Activated CD4-positive, alpha-beta memory T cell treated with anti-CD3 and anti-CD28 coated beads, Interleukin-2, amount 10 ng/mL, durations not matched to agents 7 days and 5 days (primary cell): ENCODE measurements at regions of chr1 and their contacts with region 1.

Region 1: DNA sequence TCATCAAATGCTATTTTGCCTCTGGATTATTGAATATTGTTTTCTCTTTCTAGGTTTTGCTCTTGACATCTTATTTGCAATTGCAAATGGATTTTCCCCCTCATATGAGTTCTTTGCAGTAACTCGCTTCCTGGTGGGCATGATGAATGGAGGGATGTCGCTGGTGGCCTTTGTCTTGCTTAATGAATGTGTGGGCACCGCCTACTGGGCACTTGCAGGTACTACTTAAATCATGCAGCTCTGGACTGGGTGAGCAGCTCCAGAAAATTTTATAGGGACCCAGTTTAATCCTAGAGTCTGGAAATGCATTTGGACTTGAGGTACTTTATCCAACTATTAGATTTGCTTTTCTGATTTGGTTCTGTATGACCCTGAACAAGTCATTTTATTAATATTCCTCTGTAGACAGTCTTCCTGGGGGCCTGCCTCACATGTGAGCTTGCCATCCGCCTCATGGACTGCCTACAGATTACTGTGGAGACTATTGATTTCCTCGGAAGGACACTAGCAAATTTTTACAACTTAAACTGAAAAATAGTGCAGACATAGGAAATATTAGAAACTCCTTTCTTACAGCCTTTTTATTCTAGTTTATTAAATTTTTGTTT is 44.5 kb downstream of the SLC22A15 start:
- DNase-seq: peak; percentile 56
- H3K4me3 Mint-ChIP-seq: no peak overlapping the region
- H3K27ac Mint-ChIP-seq: no peak overlapping the region
- H3K4me1 Mint-ChIP-seq: no peaks in the 10 kb centered on the region
- H3K27me3 Mint-ChIP-seq: peaks cover 7% of the 10 kb centered on the region

Region 2: DNA sequence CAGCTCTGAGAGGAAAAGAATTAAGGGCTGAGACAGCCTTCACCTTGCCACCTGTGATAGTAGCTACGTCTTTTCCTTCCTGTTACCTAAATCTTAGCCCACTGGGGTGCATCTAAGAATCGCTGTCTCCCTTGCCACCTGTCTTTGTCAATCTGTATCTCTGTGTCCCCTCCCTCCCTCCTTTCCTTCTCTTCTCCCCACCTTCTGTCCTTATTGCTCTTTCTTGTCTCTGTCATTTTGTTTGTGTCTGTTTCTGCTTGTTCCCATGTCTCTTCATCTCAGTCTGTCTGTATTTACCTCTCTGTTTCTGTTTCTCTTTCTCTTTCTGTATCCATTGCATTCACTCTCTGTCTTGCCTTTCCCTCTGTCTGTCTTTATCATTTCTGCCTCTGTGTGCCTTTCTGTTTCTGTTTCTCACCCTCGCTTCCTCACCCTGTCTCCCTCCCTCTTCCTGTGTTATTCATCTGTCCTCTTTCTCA is 14.2 kb before region 1 on chr1:
- CTCF ChIA-PET with region 1: interaction called, 34 read pairs
- POLR2A ChIA-PET with region 1: interaction called, 3 read pairs
- DNase-seq: no peak
- H3K4me3 Mint-ChIP-seq: peak overlapping the region; percentile 75
- H3K27ac Mint-ChIP-seq: peak overlapping the region; percentile 82
- H3K4me1 Mint-ChIP-seq: peaks cover 17% of the 10 kb centered on the region
- H3K27me3 Mint-ChIP-seq: no peaks in the 10 kb centered on the region

Region 3: GRCh38 chr1:116044071-116044470 is 23.3 kb after region 1 on chr1:
- CTCF ChIA-PET with region 1: no interaction called
- POLR2A ChIA-PET with region 1: no interaction called
- DNase-seq: no peak
- H3K4me3 Mint-ChIP-seq: no peak overlapping the region
- H3K27ac Mint-ChIP-seq: no peak overlapping the region
- H3K4me1 Mint-ChIP-seq: no peaks in the 10 kb centered on the region
- H3K27me3 Mint-ChIP-seq: peaks cover 8% of the 10 kb centered on the region